ENCODE measurements at regions of chr21 and their contacts with region 1.

Region 1: DNA sequence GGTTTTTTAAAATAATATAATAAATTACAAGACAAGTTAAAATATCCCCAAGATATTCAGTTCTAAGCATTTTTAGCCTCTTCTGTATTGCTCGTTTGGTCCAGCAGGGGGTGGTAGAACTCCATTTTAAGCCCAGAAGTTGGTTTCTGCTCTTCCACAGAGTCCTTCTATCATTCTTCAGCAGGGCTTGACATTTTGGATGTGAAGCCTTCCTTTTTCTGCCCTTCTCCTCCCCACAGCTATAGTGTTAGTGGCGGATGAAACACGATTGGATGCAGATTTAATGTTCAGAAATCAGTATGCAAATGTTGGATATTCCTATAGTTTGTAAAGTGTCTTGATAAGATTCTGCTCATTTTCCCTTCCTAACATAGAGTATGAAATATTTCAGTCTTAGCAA is 1.4 kb downstream of the NCAM2 start:
- DNase-seq: peak; percentile 64
- ATAC-seq: no peak
- H3K4me3 Mint-ChIP-seq: no peak overlapping the region
- H3K27ac Mint-ChIP-seq: no peak overlapping the region
- H3K4me1 Mint-ChIP-seq: peaks cover 14% of the 10 kb centered on the region
- H3K27me3 Mint-ChIP-seq: peaks cover 22% of the 10 kb centered on the region

Region 2: DNA sequence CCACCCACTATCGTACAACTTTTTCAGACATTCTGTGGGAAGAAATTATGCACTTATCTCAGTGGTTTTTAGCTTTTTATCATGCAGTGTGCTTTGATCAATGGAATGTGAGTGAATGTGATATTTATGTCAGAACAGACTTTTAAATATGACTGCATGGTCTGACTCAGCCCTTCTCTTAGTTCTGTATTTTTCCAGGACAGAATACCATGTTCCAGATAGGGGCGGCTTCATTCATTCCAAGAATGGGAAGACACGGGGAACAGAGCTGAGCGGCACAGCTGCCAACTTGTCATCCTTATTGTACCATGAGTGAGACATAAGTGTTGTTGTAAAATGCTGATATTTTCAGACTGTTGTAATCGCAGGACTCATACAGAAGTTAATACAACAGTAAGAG is 216.0 kb before region 1 on chr21:
- CTCF ChIA-PET with region 1: no interaction called
- POLR2A ChIA-PET with region 1: no interaction called
- intact Hi-C with region 1: no loop called
- DNase-seq: no peak
- ATAC-seq: no peak
- H3K4me3 Mint-ChIP-seq: no peak overlapping the region
- H3K27ac Mint-ChIP-seq: no peak overlapping the region
- H3K4me1 Mint-ChIP-seq: no peaks in the 10 kb centered on the region
- H3K27me3 Mint-ChIP-seq: no peaks in the 10 kb centered on the region

Region 3: GRCh38 chr21:21101911-21102310 is 102.3 kb after region 1 on chr21:
- CTCF ChIA-PET with region 1: no interaction called
- POLR2A ChIA-PET with region 1: no interaction called
- intact Hi-C with region 1: loop called in 1 of 2 experiments (anchors 2 kb)
- DNase-seq: no peak
- ATAC-seq: no peak
- H3K4me3 Mint-ChIP-seq: no peak overlapping the region
- H3K27ac Mint-ChIP-seq: no peak overlapping the region
- H3K4me1 Mint-ChIP-seq: no peaks in the 10 kb centered on the region
- H3K27me3 Mint-ChIP-seq: no peaks in the 10 kb centered on the region

Region 4: GRCh38 chr21:21163904-21164303 is 164.2 kb after region 1 on chr21:
- CTCF ChIA-PET with region 1: no interaction called
- POLR2A ChIA-PET with region 1: no interaction called
- intact Hi-C with region 1: loop called in 1 of 2 experiments (anchors 5 kb)
- DNase-seq: peak; percentile 58
- ATAC-seq: no peak
- H3K4me3 Mint-ChIP-seq: no peak overlapping the region
- H3K27ac Mint-ChIP-seq: no peak overlapping the region
- H3K4me1 Mint-ChIP-seq: no peaks in the 10 kb centered on the region
- H3K27me3 Mint-ChIP-seq: no peaks in the 10 kb centered on the region

Region 5: GRCh38 chr21:21921421-21922232 is 922.0 kb after region 1 on chr21:
- CTCF ChIA-PET with region 1: interaction called, 4 read pairs
- POLR2A ChIA-PET with region 1: interaction called, 3 read pairs
- intact Hi-C with region 1: loop called in 1 of 2 experiments (anchors 1 kb)
- DNase-seq: no peak
- ATAC-seq: no peak
- H3K4me3 Mint-ChIP-seq: no peak overlapping the region
- H3K27ac Mint-ChIP-seq: no peak overlapping the region
- H3K4me1 Mint-ChIP-seq: no peaks in the 10 kb centered on the region
- H3K27me3 Mint-ChIP-seq: peaks cover 6% of the 10 kb centered on the region

Region 6: DNA sequence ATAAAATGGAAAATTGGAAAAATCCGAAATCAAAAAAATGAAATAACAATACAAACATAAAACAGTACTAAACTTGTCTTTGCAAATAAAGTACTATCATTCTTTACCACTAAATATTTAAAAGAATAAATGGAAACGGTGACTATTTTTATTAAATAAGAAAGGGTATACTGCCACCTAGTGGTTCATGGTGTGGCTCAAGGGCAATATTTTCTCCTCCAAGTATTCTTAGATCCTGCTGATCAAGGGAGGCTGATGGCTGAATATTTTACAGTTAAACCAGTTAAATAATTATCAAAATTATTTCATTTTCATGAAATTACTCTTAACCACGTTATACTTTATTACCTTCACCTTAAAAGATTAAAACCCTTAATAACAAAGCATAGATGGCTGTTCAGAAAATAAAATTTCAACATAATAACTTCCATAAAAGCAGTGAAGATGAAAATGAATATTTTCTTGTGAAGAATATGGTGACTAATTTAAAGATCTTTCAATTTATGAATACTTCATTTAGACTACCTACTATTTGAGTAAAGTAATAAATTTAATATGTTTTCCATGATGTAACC is 1792.4 kb after region 1 on chr21:
- CTCF ChIA-PET with region 1: interaction called, 3 read pairs
- POLR2A ChIA-PET with region 1: no interaction called
- intact Hi-C with region 1: loop called (anchors 2 to 5 kb)
- DNase-seq: peak; percentile 30
- ATAC-seq: no peak
- H3K4me3 Mint-ChIP-seq: no peak overlapping the region
- H3K27ac Mint-ChIP-seq: no peak overlapping the region
- H3K4me1 Mint-ChIP-seq: no peaks in the 10 kb centered on the region
- H3K27me3 Mint-ChIP-seq: no peaks in the 10 kb centered on the region